Psoas muscle (tissue), 8 donors: ENCODE measurements at regions of chr16 and their contacts with region 1.

Region 1: GRCh38 chr16:67415872-67416793 is at the start of gene ZDHHC1:
- DNase-seq: peak; percentile 83 to 87
- ATAC-seq: peak; percentile 96 to 99 (median 98)
- H3K4me3 ChIP-seq: peak within 1 kb of the TSS; percentile 97
- H3K27ac ChIP-seq: peak within 1 kb of the TSS; percentile 82
- H3K4me1 ChIP-seq: peaks cover 23% of the 10 kb centered on the region
- H3K27me3 ChIP-seq: no peaks in the 10 kb centered on the region
- CTCF ChIP-seq: peak; percentile 58
- total RNA-seq, gene ZDHHC1: 5.8 to 11.0 (median 6.9) TPM

Region 2: GRCh38 chr16:67249178-67250044 is 166.7 kb before region 1 on chr16:
- intact Hi-C with region 1: loop called in 1 of 2 experiments (anchors 10 kb)
- DNase-seq: peak; percentile 4 to 63
- ATAC-seq: no peak
- H3K4me3 ChIP-seq: peak overlapping the region; percentile 94
- H3K27ac ChIP-seq: peak overlapping the region; percentile 99
- H3K4me1 ChIP-seq: peaks cover 20% of the 10 kb centered on the region
- H3K27me3 ChIP-seq: no peaks in the 10 kb centered on the region
- CTCF ChIP-seq: no peak

Region 3: DNA sequence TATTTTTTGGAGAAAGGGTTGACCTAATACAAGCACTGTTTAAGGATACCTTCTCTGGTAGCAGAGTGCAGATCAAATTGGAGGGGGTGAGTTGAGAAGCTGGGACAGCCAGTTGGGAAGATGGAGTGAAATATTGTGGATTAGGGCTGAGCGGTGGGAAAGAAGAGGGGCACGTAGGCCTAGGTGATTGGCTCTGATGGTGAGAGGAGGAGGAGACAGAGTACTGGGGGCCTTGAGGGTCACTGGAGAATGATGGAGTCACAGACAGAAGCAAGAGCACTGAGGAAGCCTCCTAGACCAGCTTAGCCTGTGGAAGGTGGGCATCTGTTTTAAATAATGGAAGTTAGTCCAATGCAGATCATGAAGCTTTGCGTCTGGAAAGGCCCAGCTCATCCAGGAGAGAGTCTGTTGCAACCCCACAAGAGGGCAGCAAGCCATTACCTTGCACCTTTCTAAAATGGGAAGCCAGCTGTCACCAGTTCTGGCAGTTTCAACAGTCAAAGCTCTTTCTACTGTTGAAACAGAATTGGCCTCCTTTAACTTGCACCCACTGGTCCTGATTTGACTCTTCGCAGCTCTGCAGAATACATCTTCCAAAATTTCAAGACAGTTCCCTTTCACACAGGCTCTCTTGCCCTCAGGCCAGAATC is 155.6 kb before region 1 on chr16:
- intact Hi-C with region 1: loop called (anchors 10 kb)
- DNase-seq: peak; percentile 53 to 75
- ATAC-seq: peak; percentile 91 to 98 (median 94)
- H3K4me3 ChIP-seq: no peak overlapping the region
- H3K27ac ChIP-seq: peak overlapping the region; percentile 66
- H3K4me1 ChIP-seq: peaks cover 10% of the 10 kb centered on the region
- H3K27me3 ChIP-seq: no peaks in the 10 kb centered on the region
- CTCF ChIP-seq: peak; percentile 68

Region 4: DNA sequence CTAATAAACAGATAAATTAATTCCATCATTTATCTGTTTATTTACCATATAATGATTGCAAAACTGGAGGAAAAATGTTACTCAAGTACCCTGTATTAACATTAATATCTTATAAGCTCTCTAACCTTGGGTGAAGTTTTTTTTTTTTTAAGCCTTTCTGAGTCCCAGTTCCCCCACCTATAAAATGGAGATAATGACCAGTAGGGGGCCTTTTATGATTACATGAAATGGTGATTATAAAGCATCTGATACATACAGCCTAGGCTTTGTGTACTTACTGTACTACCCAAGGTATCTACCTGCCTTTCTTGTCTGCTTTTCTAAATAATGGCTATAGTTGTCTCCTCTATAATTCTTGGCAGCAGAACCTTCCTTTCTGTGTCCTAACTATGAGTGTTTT is 67.0 kb before region 1 on chr16:
- intact Hi-C with region 1: loop called in 1 of 2 experiments (anchors 2 kb)
- DNase-seq: no peak
- ATAC-seq: peak in 2 of 4 donors; percentile 56 to 71
- H3K4me3 ChIP-seq: no peak overlapping the region
- H3K27ac ChIP-seq: no peak overlapping the region
- H3K4me1 ChIP-seq: no peaks in the 10 kb centered on the region
- H3K27me3 ChIP-seq: no peaks in the 10 kb centered on the region
- CTCF ChIP-seq: peak; percentile 54

Region 5: DNA sequence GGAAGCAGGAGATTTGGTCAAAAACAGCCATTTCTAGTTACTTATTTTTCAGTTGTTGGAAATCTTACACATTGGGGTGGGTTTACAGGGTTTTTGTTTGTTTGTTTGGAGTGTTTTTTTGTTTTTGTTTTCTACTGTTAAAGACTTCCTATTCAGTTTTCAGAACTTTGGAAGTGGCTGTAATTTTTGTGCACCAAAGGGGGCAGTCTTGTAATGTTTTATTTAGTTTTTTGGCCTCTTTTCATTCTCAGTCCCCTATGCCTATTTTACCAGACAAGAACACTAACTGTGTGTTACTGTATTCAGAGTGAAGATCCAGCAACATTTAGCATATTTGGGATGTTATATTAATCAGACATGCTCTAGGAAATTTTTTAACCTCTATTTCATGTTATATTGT is 43.5 kb before region 1 on chr16:
- intact Hi-C with region 1: loop called in 1 of 2 experiments (anchors 5 kb)
- DNase-seq: no peak
- ATAC-seq: peak in 1 of 4 donors; percentile 58
- H3K4me3 ChIP-seq: no peak overlapping the region
- H3K27ac ChIP-seq: no peak overlapping the region
- H3K4me1 ChIP-seq: no peaks in the 10 kb centered on the region
- H3K27me3 ChIP-seq: no peaks in the 10 kb centered on the region
- CTCF ChIP-seq: peak; percentile 32